ENCODE measurements at regions of chr6 and their contacts with region 1.

Region 1: DNA sequence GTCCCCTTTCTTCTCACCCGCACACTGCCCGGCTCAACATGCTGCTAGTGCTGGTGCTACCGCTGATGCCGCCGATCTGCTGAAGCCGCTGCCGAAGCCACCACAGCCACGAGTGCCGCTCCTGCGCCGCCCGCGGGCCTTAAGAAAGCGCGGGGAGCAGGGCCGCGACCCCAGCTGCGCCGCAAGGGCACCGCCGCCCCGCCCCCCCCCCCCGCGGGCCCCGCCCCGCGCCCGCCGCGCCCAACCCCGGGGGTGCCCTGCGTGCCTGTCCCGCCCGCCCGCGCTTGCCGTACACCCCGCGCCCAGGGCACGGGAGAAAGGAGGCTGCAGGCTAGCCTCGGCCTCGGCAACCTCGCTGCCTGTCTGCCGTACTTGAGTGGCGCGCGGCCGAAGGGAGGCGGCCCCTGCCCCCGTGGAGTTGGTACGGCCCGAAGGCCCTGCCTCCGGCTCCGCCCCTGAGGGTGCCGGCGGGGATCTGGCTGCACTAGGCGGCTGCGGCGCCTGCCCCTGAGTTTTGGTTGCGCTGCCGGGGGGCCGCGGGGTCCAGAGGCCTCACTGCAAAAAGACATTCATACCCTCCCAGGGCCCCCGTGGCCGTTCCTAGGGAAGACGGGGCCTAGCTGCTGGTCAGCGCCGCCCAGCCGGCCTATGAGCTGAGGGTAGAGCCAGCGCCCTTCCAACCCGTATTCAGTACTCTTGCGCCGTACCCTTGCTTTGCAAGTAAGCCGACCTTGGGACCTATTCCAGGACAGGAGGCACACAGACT is at the start of gene SOD2:
- H3K4me3 Mint-ChIP-seq: peak within 1 kb of the TSS; percentile 87
- H3K27ac Mint-ChIP-seq: peak within 1 kb of the TSS; percentile 93
- H3K4me1 Mint-ChIP-seq: peaks cover 36% of the 10 kb centered on the region
- H3K27me3 Mint-ChIP-seq: no peaks in the 10 kb centered on the region

Region 2: DNA sequence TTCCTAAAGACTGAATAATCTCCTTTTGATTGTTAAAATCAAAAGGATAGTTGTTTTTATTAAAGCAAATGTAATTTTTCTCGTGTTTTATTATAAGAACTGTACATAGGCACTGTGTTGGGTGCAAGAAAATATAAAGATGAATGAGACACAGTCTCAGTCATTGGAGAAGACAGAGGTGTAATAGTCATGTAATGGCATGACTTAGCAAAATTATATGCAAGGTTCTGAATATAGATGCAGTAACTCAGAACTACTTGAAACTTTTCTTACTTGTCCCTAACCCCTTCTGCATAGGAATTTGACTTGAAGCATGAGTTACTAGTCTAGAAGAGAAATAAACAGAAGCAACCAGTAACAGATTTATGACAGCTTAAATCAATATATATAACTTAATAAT is 48.9 kb after region 1 on chr6:
- intact Hi-C with region 1: loop called (anchors 5 kb)
- H3K4me3 Mint-ChIP-seq: no peak overlapping the region
- H3K27ac Mint-ChIP-seq: no peak overlapping the region
- H3K4me1 Mint-ChIP-seq: peaks cover 30% of the 10 kb centered on the region
- H3K27me3 Mint-ChIP-seq: no peaks in the 10 kb centered on the region

Region 3: GRCh38 chr6:159789377-159790148 is 96.3 kb after region 1 on chr6 and contains the start of gene TCP1:
- intact Hi-C with region 1: loop called (anchors 1 kb)
- H3K4me3 Mint-ChIP-seq: peak within 1 kb of the TSS; percentile 91
- H3K27ac Mint-ChIP-seq: peak within 1 kb of the TSS; percentile 88
- H3K4me1 Mint-ChIP-seq: peaks cover 36% of the 10 kb centered on the region
- H3K27me3 Mint-ChIP-seq: no peaks in the 10 kb centered on the region

Region 4: GRCh38 chr6:159941286-159942113 is 248.2 kb after region 1 on chr6:
- intact Hi-C with region 1: loop called (anchors 5 kb)
- H3K4me3 Mint-ChIP-seq: no peak overlapping the region
- H3K27ac Mint-ChIP-seq: no peak overlapping the region
- H3K4me1 Mint-ChIP-seq: peaks cover 22% of the 10 kb centered on the region
- H3K27me3 Mint-ChIP-seq: peaks cover 20% of the 10 kb centered on the region